Esophagus squamous epithelium (tissue), 5 donors: ENCODE measurements at regions of chr14 and their contacts with region 1.

Region 1: GRCh38 chr14:104700225-104700651 is 10.8 kb downstream of the INF2 start:
- DNase-seq: no peak
- H3K4me3 ChIP-seq: peak overlapping the region in 1 of 4 donors; percentile 27
- H3K27ac ChIP-seq: peak overlapping the region in 3 of 4 donors; percentile 44 to 57 (median 54)
- H3K4me1 ChIP-seq: peaks cover 20 to 63% (median 43%) of the 10 kb centered on the region in 3 donors
- H3K27me3 ChIP-seq: no peaks in the 10 kb centered on the region
- CTCF ChIP-seq: no peak
- POLR2A ChIP-seq: no peak

Region 2: DNA sequence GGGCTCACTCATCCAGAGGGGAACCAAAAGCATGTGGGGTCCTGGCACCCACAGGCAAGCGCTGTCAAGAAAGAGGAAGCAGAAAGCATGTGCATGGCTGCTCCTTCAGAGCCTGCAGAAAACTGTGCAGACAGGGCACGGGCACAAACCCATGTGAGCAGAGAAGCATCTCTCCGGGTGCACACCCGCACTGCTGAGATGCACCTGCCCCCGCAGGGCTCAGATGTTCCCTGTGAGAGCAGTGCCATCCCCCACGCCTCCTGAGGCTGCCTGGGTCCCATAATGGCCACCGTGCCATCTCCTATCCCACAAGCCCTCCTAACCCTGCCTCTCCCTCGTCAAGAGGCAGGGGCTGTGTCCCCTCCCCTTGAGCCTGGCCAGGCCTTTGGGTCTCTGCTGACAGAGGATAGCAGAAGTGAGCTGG is 43.1 kb before region 1 on chr14:
- intact Hi-C with region 1: loop called (anchors 5 kb)
- DNase-seq: no peak
- H3K4me3 ChIP-seq: no peak overlapping the region
- H3K27ac ChIP-seq: no peak overlapping the region
- H3K4me1 ChIP-seq: peaks cover 0 to 8% (median 4%) of the 10 kb centered on the region in 3 donors
- H3K27me3 ChIP-seq: peaks cover 0 to 40% (median 0%) of the 10 kb centered on the region in 4 donors
- CTCF ChIP-seq: no peak
- POLR2A ChIP-seq: no peak